CD4-positive, alpha-beta memory T cell (primary cell): ENCODE measurements at regions of chr17 and their contacts with region 1.

Region 1: DNA sequence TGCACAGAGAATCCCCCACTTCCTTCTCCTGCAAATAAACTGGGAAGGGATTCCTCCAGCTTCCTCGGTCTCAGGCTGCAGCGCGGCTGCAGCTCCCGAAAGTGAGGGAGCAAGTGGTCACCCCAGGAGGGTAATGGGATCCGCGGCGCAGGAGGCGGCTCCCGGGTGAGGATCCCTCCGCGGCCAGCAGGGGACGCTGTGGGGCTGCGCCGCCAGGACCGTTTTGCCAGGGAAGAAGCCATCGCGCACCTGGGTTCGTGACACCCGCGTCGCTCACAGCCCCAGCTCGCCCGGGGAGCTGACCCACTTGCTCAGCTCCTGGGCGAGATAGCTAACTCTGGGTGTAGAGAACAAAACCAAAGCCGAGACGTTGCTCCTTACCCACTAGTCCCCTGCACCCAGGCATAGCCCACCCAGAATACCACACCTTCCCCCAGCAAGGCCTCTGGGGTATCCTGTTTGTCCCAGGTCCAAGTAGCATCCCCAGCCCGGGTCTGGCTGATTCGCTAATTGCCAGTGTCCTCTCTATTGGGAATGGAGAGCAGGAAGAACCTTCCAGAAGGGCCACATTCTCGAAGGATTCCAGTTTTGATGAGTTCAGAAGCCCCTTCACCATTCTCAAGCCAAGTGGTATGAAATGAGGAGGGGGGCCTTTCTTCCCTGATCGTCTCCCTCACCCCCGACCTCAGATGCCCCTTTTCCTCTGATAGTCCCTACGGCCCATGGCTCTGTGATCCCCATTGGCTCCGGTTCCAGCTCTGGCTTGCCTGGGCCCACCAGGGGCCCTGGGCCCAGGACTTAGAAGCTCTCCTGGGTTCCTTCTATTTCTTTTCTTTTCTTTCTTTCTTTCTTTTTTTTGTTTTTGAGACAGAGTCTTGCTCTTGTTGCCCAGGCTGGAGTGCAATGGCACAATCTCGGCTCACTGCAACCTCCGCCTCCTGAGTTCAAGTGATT is 14.1 kb downstream of the CYGB start:
- DNase-seq: peak; percentile 67 to 84 (median 78)
- H3K4me3 ChIP-seq: no peak overlapping the region
- H3K4me3 Mint-ChIP-seq: peak overlapping the region in 6 of 8 donors; percentile 32 to 79 (median 64)
- H3K27ac ChIP-seq: no peak overlapping the region
- H3K27ac Mint-ChIP-seq: peak overlapping the region; percentile 58 to 97 (median 88)
- H3K4me1 ChIP-seq: peaks cover 27% of the 10 kb centered on the region
- H3K4me1 Mint-ChIP-seq: peaks cover 15 to 51% (median 27%) of the 10 kb centered on the region in 4 donors
- H3K27me3 ChIP-seq: no peaks in the 10 kb centered on the region
- H3K27me3 Mint-ChIP-seq: no peaks in the 10 kb centered on the region

Region 2: GRCh38 chr17:76397687-76398487 is 125.5 kb before region 1 on chr17:
- CTCF ChIA-PET with region 1: no interaction called
- POLR2A ChIA-PET with region 1: no interaction called
- intact Hi-C with region 1: no loop called
- DNase-seq: peak; percentile 73 to 76 (median 74)
- H3K4me3 ChIP-seq: no peak overlapping the region
- H3K4me3 Mint-ChIP-seq: no peak overlapping the region
- H3K27ac ChIP-seq: no peak overlapping the region
- H3K27ac Mint-ChIP-seq: peak overlapping the region in 4 of 7 donors; percentile 5 to 82 (median 51)
- H3K4me1 ChIP-seq: no peaks in the 10 kb centered on the region
- H3K4me1 Mint-ChIP-seq: peaks cover 0 to 4% (median 2%) of the 10 kb centered on the region in 4 donors
- H3K27me3 ChIP-seq: no peaks in the 10 kb centered on the region
- H3K27me3 Mint-ChIP-seq: no peaks in the 10 kb centered on the region

Region 3: GRCh38 chr17:76501018-76501826 is 22.1 kb before region 1 on chr17 and contains the start of gene RHBDF2:
- CTCF ChIA-PET with region 1: interaction called, 15 read pairs
- POLR2A ChIA-PET with region 1: interaction called, 4 read pairs
- intact Hi-C with region 1: no loop called
- DNase-seq: peak; percentile 92 to 98 (median 95)
- H3K4me3 ChIP-seq: peak within 1 kb of the TSS; percentile 61 to 83
- H3K4me3 Mint-ChIP-seq: peak within 1 kb of the TSS; percentile 86 to 91 (median 89)
- H3K27ac ChIP-seq: peak within 1 kb of the TSS; percentile 69
- H3K27ac Mint-ChIP-seq: peak within 1 kb of the TSS; percentile 85 to 100 (median 98)
- H3K4me1 ChIP-seq: peaks cover 41% of the 10 kb centered on the region
- H3K4me1 Mint-ChIP-seq: peaks cover 15 to 56% (median 40%) of the 10 kb centered on the region in 4 donors
- H3K27me3 ChIP-seq: no peaks in the 10 kb centered on the region
- H3K27me3 Mint-ChIP-seq: no peaks in the 10 kb centered on the region
- total RNA-seq, gene RHBDF2: 50.0 to 62.2 TPM

Region 4: DNA sequence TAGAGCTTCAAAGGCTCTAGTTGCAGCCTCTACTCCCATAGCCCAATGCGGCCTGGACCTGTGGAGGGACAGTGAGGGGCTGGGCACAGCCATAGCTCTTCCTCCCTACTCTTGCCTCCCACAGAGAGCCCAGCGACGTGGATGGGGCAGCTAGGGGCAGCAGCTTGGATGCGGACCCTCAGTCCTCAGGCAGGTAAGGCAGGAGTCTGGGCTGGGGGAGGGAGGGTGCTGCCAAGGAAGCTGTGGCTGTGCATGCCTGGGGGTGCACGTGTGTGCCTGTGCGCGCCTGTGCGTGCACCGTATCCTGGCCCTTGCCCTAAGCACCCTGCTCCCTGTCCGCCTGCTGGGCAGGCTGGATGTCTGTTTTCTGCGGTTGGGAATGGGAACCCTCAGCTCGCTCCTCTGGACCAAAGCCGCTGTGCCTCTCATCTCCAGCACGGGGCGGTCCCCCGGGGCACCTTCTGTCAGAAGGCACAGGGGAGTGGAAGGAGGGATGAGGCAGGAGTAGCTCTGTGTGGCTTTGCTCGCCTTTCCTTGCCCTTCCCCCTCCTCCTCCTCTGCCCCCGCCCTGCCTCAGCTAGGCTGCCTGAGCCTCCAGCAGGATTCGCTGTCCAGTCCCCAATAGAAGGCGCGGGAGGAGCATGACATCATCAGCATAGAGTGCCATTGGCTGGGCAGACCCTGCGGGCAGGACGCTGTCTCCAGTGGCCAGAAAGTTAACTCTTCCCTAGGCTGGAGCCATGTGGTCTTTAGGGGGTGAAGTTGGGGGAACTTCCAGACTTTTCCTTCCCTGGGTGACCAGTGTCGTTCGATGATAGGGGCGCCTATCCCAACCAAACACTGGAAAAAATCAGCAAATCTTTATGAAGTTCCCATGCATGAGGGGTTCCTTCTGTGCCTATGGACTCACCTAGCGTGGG is 17.3 kb after region 1 on chr17:
- CTCF ChIA-PET with region 1: interaction called, 80 read pairs
- POLR2A ChIA-PET with region 1: interaction called, 14 read pairs
- intact Hi-C with region 1: no loop called
- DNase-seq: peak in 1 of 5 donors; percentile 38
- H3K4me3 ChIP-seq: no peak overlapping the region
- H3K4me3 Mint-ChIP-seq: no peak overlapping the region
- H3K27ac ChIP-seq: no peak overlapping the region
- H3K27ac Mint-ChIP-seq: peak overlapping the region in 1 of 7 donors; percentile 7
- H3K4me1 ChIP-seq: no peaks in the 10 kb centered on the region
- H3K4me1 Mint-ChIP-seq: peaks cover 1 to 9% (median 3%) of the 10 kb centered on the region in 4 donors
- H3K27me3 ChIP-seq: peaks cover 9% of the 10 kb centered on the region
- H3K27me3 Mint-ChIP-seq: peaks cover 29% of the 10 kb centered on the region in 2 donors

Region 5: DNA sequence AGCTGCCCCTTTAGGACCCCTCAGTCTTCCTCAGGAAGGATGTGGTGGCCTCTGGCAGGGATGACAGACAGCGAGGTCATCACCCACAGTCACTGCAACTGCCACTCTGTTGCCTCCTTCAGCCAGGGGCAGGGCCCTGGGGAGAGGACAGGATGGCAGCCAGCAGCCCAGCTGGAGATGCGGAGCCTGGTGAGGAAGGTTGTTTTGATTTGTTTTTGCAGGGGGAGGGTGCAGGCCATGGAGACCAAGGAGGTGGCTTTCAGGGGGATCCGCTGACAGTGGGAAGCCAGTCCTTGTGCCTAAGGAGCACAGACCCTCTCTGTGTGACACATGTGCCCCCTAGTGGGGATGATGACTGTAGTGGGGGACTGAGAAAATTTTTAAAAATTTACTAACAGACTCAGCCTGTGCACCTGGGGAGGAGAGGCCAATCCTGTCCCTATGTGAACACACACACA is 23.9 kb after region 1 on chr17:
- CTCF ChIA-PET with region 1: interaction called, 80 read pairs
- POLR2A ChIA-PET with region 1: interaction called, 14 read pairs
- intact Hi-C with region 1: loop called (anchors 1 kb)
- DNase-seq: peak; percentile 37 to 62 (median 59)
- H3K4me3 ChIP-seq: no peak overlapping the region
- H3K4me3 Mint-ChIP-seq: no peak overlapping the region
- H3K27ac ChIP-seq: no peak overlapping the region
- H3K27ac Mint-ChIP-seq: peak overlapping the region in 1 of 7 donors; percentile 38
- H3K4me1 ChIP-seq: peaks cover 7% of the 10 kb centered on the region
- H3K4me1 Mint-ChIP-seq: peaks cover 0 to 2% (median 0%) of the 10 kb centered on the region in 4 donors
- H3K27me3 ChIP-seq: no peaks in the 10 kb centered on the region
- H3K27me3 Mint-ChIP-seq: peaks cover 6% of the 10 kb centered on the region in 2 donors

Region 6: DNA sequence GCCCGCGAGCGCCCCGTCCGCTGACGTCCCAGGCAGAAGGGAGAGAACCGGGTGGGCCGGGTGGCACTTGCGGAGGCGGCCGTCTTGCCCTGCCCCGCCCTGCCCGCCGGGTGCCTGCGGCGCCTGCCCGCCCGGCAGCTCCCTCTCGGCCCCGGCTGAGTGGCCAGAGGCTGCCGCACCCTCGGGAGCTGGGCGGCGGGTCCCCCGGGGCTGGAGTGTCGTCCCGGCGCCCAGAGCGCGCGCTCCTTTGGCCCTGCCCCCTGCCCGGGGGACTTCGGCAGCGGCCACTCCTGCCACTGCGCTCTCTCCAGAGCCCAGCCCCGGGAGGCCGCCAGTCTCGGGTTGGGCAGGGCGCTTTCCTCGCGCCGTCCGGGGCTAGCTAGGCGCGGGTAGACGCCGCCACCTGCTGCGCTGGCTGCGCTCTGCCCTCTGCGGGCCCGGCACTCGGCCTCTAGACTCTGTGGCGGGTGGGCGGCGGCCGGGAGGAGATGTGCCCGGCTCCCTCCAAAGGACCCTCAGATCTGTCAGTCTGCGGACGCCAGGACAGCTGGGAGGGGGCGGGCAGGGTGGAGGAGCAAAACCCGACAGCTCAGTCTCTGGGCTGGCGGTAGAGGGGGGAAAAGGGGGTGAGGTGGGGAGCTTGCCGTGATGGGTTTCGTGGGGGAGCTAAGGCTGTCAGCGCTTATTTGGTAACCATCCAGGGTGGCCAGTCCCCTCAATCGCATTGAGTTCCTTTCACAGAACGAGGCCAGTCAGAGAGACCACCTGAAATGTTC is 62.6 kb after region 1 on chr17 and contains the start of gene ST6GALNAC2:
- CTCF ChIA-PET with region 1: interaction called, 14 read pairs
- POLR2A ChIA-PET with region 1: interaction called, 11 read pairs
- intact Hi-C with region 1: loop called (anchors 1 kb)
- DNase-seq: peak in 4 of 5 donors; percentile 34 to 58 (median 50)
- H3K4me3 ChIP-seq: peak within 1 kb of the TSS in 1 of 2 donors; percentile 52
- H3K4me3 Mint-ChIP-seq: peak within 1 kb of the TSS; percentile 74 to 83 (median 79)
- H3K27ac ChIP-seq: no peak within 1 kb of the TSS
- H3K27ac Mint-ChIP-seq: peak within 1 kb of the TSS in 2 of 7 donors; percentile 8 to 18
- H3K4me1 ChIP-seq: peaks cover 16% of the 10 kb centered on the region
- H3K4me1 Mint-ChIP-seq: peaks cover 5 to 25% (median 11%) of the 10 kb centered on the region in 4 donors
- H3K27me3 ChIP-seq: peaks cover 12% of the 10 kb centered on the region
- H3K27me3 Mint-ChIP-seq: peaks cover 25 to 29% of the 10 kb centered on the region in 2 donors
- total RNA-seq, gene ST6GALNAC2: 3.3 to 3.6 TPM